ENCODE measurements at regions of chr1 and their contacts with region 1.

Region 1: DNA sequence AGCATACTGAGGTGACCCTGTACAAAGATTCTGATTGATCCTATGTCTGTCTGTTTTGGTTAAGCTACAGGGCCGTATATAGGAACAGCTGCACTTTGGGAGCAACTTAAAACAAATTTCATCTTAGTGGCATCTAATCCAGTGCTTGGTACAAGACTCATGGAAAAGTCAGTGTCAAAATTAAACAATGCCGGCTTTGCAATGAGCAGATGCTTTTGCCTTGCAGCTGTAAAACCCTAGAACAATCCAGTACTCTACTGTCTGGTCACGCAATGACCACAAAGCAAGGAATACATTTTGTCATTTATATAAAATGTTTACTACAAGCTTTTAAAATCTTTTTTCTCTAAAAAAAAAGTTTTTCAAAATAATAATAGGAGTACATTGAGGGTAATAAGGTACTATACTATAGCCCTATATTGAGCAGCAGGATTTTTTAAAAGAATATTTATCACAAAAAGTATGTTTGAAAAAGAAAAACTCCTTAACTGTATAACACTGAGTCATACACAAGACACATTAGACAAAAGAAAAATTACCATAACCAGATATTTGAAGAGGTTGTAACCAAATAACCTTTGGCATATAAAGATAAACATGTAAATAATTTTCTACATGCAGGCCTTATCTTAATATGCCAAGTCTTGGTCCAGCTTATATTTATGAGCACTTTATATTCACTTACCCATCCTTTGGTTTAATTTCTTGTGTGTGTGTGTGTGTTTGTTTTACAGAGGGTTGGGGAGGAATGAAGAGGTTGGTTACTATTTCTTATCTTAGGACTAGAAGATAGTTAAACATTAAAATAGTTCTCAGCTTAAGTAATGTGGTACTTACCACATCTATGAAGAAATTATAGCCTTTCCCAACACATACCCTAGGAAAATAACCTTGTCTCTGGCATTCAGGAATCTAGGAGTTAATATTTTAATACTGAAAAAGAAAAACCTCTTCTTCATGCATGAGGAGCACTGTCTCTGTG is 262.3 kb downstream of the FAF1 start:
- DNase-seq: no peak
- ATAC-seq: no peak
- H3K4me3 ChIP-seq: no peak overlapping the region
- H3K27ac ChIP-seq: no peak overlapping the region
- H3K4me1 ChIP-seq: peaks cover 0 to 21% (median 3%) of the 10 kb centered on the region in 12 donors
- H3K27me3 ChIP-seq: no peaks in the 10 kb centered on the region
- CTCF ChIP-seq: no peak
- POLR2A ChIP-seq: no peak

Region 2: DNA sequence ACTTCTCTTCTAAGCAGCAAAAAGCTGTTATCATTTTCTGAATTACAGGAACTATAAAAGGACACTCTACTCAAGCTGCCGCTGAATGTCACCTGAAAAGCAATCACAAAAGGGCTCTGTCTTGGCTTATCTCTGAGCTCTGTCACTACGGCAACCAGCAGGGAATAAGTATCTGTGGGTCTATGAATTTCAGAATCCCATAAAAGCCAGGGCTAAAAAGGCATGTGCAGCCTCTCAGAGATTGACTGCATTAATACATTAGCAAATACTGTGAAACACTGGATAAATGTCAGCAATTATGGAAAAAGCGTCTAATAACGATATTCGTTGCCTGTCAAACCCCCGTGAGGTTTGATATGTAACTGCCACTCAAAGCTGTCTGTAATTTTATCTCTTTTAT is 64.3 kb before region 1 on chr1:
- intact Hi-C with region 1: loop called in 1 of 10 experiments (anchors 10 kb)
- DNase-seq: no peak
- ATAC-seq: no peak
- H3K4me3 ChIP-seq: no peak overlapping the region
- H3K27ac ChIP-seq: no peak overlapping the region
- H3K4me1 ChIP-seq: peaks cover 0 to 14% (median 0%) of the 10 kb centered on the region in 12 donors
- H3K27me3 ChIP-seq: no peaks in the 10 kb centered on the region
- CTCF ChIP-seq: no peak
- POLR2A ChIP-seq: no peak

Measured in heart left ventricle (tissue), 16 donors.